Vagina (tissue), 2 donors: ENCODE measurements at regions of chr6 and their contacts with region 1.

Region 1: DNA sequence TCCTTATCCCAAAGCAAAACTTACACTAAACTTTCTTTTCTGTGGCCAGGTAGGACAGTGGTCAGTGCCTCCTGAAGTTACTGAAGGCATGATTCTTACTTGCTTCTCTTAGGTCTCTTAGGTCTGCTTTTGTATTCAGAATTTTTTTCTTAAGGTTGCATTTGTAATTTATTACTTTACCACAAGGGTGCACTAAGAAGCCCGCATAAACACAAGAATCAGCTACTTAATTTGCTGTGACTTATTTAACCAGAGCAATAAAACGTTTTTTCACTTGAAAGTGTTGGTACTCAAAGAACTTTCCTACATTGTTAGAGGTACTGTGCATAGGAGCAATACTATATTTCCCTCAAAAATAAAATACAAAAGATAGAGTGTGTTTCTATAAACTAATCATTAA is 75.4 kb upstream of the LAMA2 start:
- DNase-seq: no peak
- H3K4me3 ChIP-seq: no peak overlapping the region
- H3K27ac ChIP-seq: no peak overlapping the region
- H3K4me1 ChIP-seq: no peaks in the 10 kb centered on the region
- H3K27me3 ChIP-seq: no peaks in the 10 kb centered on the region
- CTCF ChIP-seq: no peak
- POLR2A ChIP-seq: no peak

Region 2: DNA sequence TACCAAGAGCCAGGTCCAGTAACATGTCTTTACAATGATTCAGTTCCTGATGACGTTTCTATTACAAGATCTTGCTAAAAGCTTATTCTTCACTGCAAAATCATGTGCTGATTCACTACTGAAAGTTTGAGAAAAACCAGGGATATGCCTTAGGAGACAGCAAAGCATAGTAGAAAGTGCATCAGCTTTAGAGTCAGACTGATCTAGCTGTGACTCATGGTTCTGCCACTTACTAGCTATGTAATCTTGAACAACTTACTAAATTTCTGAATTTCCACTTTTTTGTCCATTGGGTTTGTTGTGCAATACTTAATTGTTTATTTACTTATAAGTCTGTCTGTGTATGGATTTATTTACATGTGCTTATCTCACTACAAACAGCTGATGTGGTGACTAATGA is 1887.6 kb before region 1 on chr6:
- intact Hi-C with region 1: no loop called
- DNase-seq: no peak
- H3K4me3 ChIP-seq: no peak overlapping the region
- H3K27ac ChIP-seq: no peak overlapping the region
- H3K4me1 ChIP-seq: peaks cover 6% of the 10 kb centered on the region
- H3K27me3 ChIP-seq: no peaks in the 10 kb centered on the region
- CTCF ChIP-seq: no peak
- POLR2A ChIP-seq: no peak

Region 3: DNA sequence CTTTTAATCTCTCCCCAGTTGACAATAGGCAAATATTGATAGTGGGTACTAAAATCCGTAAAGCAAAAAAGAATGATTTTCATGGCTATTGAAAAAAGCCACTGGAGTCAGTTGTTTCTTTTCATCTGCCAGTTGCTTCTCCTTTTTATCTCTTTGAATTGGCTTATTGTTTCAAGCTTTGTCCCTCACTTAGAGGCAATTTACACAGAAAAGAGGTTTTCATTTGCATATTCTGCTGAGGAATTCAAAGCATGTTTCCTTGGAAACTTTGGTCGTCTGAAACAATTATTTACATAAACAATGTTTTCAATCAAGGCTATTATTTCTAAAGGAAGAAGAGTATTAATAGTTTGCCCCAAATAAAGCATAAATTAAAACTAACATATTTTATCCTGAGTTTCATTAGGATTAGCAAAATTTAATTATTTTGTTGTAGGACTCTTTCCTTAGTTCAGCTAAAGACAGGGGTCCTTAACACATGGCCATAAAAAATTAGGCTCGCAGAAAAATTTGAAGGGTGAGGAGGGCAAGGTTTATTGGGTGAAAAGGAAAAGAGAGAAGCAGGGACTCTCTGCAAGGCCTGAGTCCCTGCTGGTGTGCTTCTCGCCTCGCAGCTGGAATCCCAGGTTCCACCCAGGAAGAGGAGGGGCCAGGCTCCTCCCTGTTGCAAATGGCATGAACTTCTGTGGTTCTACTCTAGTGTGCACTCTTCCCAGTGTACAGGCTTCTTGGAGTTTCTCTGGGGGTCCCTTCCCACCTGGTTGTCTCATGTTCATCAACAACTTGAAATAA is 63.4 kb before region 1 on chr6:
- intact Hi-C with region 1: loop called (anchors 2 kb)
- DNase-seq: no peak
- H3K4me3 ChIP-seq: no peak overlapping the region
- H3K27ac ChIP-seq: no peak overlapping the region
- H3K4me1 ChIP-seq: no peaks in the 10 kb centered on the region
- H3K27me3 ChIP-seq: no peaks in the 10 kb centered on the region
- CTCF ChIP-seq: no peak
- POLR2A ChIP-seq: no peak